ENCODE measurements at regions of chr2 and their contacts with region 1.

Region 1: GRCh38 chr2:160278879-160279177 is 78.8 kb upstream of the ITGB6 start:
- DNase-seq: no peak
- ATAC-seq: peak; percentile 68
- H3K4me3 Mint-ChIP-seq: no peak overlapping the region
- H3K27ac Mint-ChIP-seq: no peak overlapping the region
- H3K4me1 Mint-ChIP-seq: peaks cover 3% of the 10 kb centered on the region
- H3K27me3 Mint-ChIP-seq: no peaks in the 10 kb centered on the region
- CTCF ChIP-seq: no peak

Region 2: DNA sequence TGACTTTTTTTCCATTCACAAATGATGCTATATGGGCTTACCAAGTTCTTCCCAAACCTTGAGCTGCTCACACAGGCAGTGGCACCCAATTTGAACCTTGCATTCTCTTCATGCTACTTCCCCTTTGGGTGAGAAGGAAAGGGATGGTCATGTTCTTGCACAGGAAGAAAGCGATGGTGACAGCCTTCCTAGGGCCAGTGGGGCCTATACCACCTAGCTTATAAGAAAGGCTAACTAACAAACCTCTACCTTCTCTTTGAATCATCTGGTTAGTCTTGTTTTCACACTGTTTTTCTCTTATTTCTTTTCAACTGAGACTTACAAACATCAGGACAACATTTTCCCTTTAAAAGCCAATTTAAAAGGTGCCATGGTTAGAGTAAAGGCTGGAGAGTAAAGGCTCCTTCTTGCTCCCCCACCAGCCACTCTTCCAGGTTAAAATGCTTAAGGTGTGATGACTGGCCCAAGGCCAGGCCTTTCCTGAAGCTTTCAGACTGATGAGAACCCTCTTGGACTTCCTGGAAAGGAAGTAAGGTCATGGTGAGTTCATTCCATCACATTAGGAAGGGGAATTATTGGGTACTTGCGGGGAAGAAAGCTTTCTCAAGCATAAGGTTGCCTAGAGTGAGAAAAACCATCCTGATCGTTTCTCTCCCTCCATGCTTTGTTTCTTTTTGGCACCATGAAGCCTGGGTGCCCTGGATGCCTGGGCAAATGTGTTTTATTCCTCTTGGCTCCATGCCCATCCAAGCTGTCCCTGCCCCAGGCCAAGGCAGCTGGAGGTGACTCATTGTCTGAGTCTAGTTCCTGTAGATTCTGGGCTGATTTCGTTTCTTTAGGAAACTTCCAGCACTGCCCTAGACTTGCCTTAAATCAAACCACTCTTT is 37.3 kb before region 1 on chr2:
- CTCF ChIA-PET with region 1: no interaction called
- POLR2A ChIA-PET with region 1: no interaction called
- DNase-seq: no peak
- ATAC-seq: no peak
- H3K4me3 Mint-ChIP-seq: no peak overlapping the region
- H3K27ac Mint-ChIP-seq: no peak overlapping the region
- H3K4me1 Mint-ChIP-seq: peaks cover 12% of the 10 kb centered on the region
- H3K27me3 Mint-ChIP-seq: no peaks in the 10 kb centered on the region
- CTCF ChIP-seq: no peak

Region 3: GRCh38 chr2:160292225-160292624 is 13.4 kb after region 1 on chr2:
- CTCF ChIA-PET with region 1: interaction called, 10 read pairs
- POLR2A ChIA-PET with region 1: no interaction called
- DNase-seq: no peak
- ATAC-seq: no peak
- H3K4me3 Mint-ChIP-seq: no peak overlapping the region
- H3K27ac Mint-ChIP-seq: no peak overlapping the region
- H3K4me1 Mint-ChIP-seq: peaks cover 8% of the 10 kb centered on the region; the same call in 1 of the 2 replicates
- H3K27me3 Mint-ChIP-seq: no peaks in the 10 kb centered on the region
- CTCF ChIP-seq: no peak

Region 4: GRCh38 chr2:160332318-160332717 is 53.5 kb after region 1 on chr2:
- CTCF ChIA-PET with region 1: no interaction called
- POLR2A ChIA-PET with region 1: no interaction called
- DNase-seq: no peak
- ATAC-seq: peak; percentile 84
- H3K4me3 Mint-ChIP-seq: no peak overlapping the region
- H3K27ac Mint-ChIP-seq: no peak overlapping the region; the same call in 1 of the 2 replicates
- H3K4me1 Mint-ChIP-seq: peaks cover 40% of the 10 kb centered on the region
- H3K27me3 Mint-ChIP-seq: no peaks in the 10 kb centered on the region
- CTCF ChIP-seq: no peak

Measured in WTC11 (cell line).